CD4-positive, alpha-beta T cell (primary cell): ENCODE measurements at regions of chr3 and their contacts with region 1.

Region 1: DNA sequence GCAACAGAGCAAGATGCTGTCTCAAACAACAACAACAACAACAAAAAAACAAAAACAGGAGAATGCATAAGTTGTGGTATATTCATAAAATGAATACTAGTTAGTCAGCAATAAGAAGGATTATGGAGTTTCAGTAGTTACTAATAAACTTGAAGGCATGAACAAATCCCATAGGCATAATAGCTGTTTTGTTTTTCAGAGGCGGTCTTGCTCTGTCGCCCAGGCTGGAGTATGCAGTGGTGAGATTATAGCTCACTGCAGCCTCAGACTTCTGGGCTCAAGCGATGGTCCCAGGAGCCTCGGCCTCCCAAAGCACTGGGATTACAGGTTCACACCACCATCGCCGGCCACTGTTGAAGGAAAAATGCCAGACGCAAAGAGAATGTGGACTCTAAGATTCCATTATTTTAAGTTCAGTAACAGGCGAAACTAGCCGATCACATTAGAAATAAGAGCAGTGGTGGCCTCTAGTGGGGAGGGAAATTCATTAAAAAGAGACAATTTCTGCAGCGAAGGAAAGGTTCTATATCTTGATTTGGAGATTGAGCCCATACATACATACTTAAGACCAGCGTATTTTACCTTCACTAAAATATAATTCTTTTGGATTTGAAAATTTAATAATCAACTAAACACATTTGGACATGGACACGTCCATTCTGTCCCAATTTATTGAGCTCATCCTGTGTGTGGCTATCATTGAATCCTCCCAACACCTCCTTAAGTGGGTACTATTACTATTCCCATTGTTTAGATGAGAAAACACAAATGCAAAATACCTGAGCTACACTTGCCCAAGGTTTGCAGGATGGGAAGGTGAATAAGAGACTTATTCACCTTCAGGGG is 27.4 kb upstream of the HDAC11 start:
- DNase-seq: peak in 11 of 14 experiments; percentile 14 to 78 (median 32)
- ATAC-seq: peak; percentile 22
- H3K4me3 ChIP-seq: peak overlapping the region; percentile 71
- H3K4me3 Mint-ChIP-seq: peak overlapping the region; percentile 94
- H3K27ac ChIP-seq: peak overlapping the region in 1 of 2 donors; percentile 72
- H3K27ac Mint-ChIP-seq: peak overlapping the region; percentile 79
- H3K4me1 ChIP-seq: peaks cover 21% of the 10 kb centered on the region
- H3K4me1 Mint-ChIP-seq: peaks cover 28% of the 10 kb centered on the region
- H3K27me3 ChIP-seq: no peaks in the 10 kb centered on the region
- H3K27me3 Mint-ChIP-seq: no peaks in the 10 kb centered on the region
- CTCF ChIP-seq: peak; percentile 79

Region 2: GRCh38 chr3:12081826-12082225 is 1370.9 kb before region 1 on chr3:
- CTCF ChIA-PET with region 1: no interaction called
- POLR2A ChIA-PET with region 1: no interaction called
- intact Hi-C with region 1: no loop called
- DNase-seq: no peak
- ATAC-seq: no peak
- H3K4me3 ChIP-seq: no peak overlapping the region
- H3K4me3 Mint-ChIP-seq: no peak overlapping the region
- H3K27ac ChIP-seq: no peak overlapping the region
- H3K27ac Mint-ChIP-seq: no peak overlapping the region
- H3K4me1 ChIP-seq: no peaks in the 10 kb centered on the region
- H3K4me1 Mint-ChIP-seq: no peaks in the 10 kb centered on the region
- H3K27me3 ChIP-seq: peaks cover 0 to 17% of the 10 kb centered on the region in 2 experiments
- H3K27me3 Mint-ChIP-seq: peaks cover 48% of the 10 kb centered on the region
- CTCF ChIP-seq: no peak

Region 3: DNA sequence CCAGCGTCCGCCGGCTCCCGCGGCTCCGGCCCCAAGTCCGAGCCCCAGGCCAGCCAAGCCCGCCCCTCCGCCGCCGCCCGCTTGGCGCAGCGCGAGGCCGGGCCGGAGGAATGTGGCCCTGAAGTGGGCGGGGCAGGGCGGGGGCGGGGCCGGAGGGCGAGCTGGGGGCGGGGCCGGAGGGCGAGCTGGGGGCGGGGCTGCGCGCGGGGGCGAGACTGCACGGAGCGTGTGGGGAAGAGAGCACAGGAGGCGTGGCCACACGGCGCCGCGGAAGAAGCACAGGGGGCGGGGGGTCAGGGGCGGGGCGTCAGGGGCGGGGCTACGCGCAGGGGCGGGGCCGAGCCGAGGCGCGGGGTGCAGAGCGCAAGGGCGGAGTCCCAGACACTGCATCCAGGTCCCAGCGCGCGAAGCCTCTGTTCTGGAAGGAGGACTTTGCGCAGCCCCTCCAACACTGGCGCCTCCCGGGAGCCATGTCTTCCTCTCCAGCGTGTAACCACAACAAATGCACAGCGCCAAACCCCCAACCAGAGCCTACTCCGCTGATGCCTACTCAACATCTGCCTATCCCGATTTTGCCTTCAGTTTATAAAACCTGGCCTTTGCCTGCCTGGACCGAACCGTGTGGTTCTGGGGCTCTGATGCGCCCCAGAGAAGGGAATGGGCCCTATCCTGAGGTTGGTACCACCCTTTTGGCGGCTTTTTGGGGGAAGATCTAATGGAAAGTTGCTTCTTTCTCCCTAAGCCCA is 484.9 kb before region 1 on chr3:
- CTCF ChIA-PET with region 1: no interaction called
- POLR2A ChIA-PET with region 1: no interaction called
- intact Hi-C with region 1: loop called in 1 of 2 experiments (anchors 5 kb)
- DNase-seq: peak; percentile 82 to 97 (median 88)
- ATAC-seq: peak; percentile 95
- H3K4me3 ChIP-seq: peak overlapping the region; percentile 47
- H3K4me3 Mint-ChIP-seq: peak overlapping the region; percentile 80
- H3K27ac ChIP-seq: no peak overlapping the region
- H3K27ac Mint-ChIP-seq: peak overlapping the region; percentile 67
- H3K4me1 ChIP-seq: peaks cover 65% of the 10 kb centered on the region
- H3K4me1 Mint-ChIP-seq: peaks cover 78% of the 10 kb centered on the region
- H3K27me3 ChIP-seq: no peaks in the 10 kb centered on the region
- H3K27me3 Mint-ChIP-seq: no peaks in the 10 kb centered on the region
- CTCF ChIP-seq: no peak

Region 4: GRCh38 chr3:13091898-13092611 is 360.7 kb before region 1 on chr3:
- CTCF ChIA-PET with region 1: interaction called, 6 read pairs
- POLR2A ChIA-PET with region 1: interaction called, 4 read pairs
- intact Hi-C with region 1: loop called (anchors 1 to 2 kb)
- DNase-seq: peak; percentile 63 to 88 (median 78)
- ATAC-seq: peak; percentile 93
- H3K4me3 ChIP-seq: no peak overlapping the region
- H3K4me3 Mint-ChIP-seq: no peak overlapping the region
- H3K27ac ChIP-seq: no peak overlapping the region
- H3K27ac Mint-ChIP-seq: no peak overlapping the region
- H3K4me1 ChIP-seq: peaks cover 8% of the 10 kb centered on the region
- H3K4me1 Mint-ChIP-seq: peaks cover 6% of the 10 kb centered on the region
- H3K27me3 ChIP-seq: peaks cover 0 to 3% of the 10 kb centered on the region in 2 experiments
- H3K27me3 Mint-ChIP-seq: peaks cover 18% of the 10 kb centered on the region
- CTCF ChIP-seq: peak; percentile 94

Region 5: DNA sequence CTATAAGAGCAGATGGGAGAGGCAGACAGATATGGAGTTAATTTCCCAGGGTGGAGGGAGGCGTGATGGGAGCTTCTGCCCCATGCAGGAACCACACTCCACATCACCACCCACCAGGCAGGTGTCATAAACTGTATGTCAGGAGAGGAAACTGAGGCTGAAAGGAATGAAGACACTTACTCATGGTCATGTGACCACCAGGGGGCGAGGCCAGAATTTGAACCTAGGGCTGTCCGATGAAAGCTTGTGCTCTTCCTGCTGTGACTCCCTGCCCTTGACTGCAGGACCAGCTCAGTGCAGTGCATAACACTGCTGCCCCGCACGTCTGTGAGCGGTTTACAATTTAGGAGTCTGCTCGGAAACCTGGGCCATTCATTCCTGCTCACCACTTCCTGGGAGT is 61.4 kb before region 1 on chr3:
- CTCF ChIA-PET with region 1: interaction called, 56 read pairs
- POLR2A ChIA-PET with region 1: interaction called, 17 read pairs
- intact Hi-C with region 1: loop called (anchors 1 kb)
- DNase-seq: peak in 11 of 14 experiments; percentile 18 to 69 (median 26)
- ATAC-seq: peak; percentile 34
- H3K4me3 ChIP-seq: no peak overlapping the region
- H3K4me3 Mint-ChIP-seq: no peak overlapping the region
- H3K27ac ChIP-seq: no peak overlapping the region
- H3K27ac Mint-ChIP-seq: peak overlapping the region; percentile 20
- H3K4me1 ChIP-seq: peaks cover 25% of the 10 kb centered on the region
- H3K4me1 Mint-ChIP-seq: peaks cover 26% of the 10 kb centered on the region
- H3K27me3 ChIP-seq: no peaks in the 10 kb centered on the region
- H3K27me3 Mint-ChIP-seq: no peaks in the 10 kb centered on the region
- CTCF ChIP-seq: peak; percentile 51

Region 6: DNA sequence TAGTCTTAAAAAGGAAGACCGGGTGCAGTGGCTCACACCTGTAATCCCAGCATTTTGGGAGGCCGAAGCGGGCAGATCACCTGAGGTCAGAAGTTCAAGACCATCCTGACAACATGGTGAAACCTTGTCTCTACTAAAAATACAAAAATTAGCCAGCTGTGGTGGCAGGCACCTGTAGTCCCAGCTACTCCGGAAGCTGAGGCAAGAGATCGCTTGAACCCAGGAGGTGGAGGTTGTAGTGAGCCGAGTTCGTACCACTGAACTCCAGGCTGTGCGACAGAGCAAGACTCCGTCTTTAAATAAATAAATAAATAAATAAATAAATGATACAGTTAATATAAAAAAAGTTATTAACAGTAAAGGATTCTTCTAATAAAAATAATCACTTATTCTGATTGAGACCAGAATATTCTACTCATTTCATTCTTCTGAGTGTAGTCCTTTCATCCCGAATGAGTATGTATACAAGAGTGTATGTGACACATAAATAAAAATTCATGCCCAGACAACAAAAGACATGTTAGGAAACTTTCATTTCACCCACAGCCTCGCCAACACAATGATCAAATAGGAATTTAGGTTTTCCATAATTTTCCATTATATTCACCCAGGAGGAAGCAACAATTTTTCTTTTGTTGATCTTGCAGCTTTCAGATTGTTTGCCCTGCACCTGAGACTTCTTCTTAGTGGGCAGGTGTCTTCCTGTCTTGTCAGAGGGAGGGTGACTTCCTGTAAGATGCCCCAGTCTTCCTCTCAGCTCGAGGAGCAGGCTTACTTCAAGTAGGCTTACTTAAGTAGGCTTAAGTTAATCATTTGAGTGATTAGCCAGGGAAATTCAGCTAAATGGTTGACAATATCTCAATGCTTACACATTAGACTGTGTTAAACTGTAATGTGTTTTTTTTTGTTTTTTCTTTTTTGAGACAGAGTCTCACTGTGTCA is 24.8 kb before region 1 on chr3:
- CTCF ChIA-PET with region 1: interaction called, 11 read pairs
- POLR2A ChIA-PET with region 1: interaction called, 16 read pairs
- intact Hi-C with region 1: no loop called
- DNase-seq: peak in 10 of 14 experiments; percentile 20 to 82 (median 48)
- ATAC-seq: peak; percentile 99
- H3K4me3 ChIP-seq: no peak overlapping the region
- H3K4me3 Mint-ChIP-seq: peak overlapping the region; percentile 59
- H3K27ac ChIP-seq: peak overlapping the region; percentile 64 to 69
- H3K27ac Mint-ChIP-seq: peak overlapping the region; percentile 86
- H3K4me1 ChIP-seq: peaks cover 50% of the 10 kb centered on the region
- H3K4me1 Mint-ChIP-seq: peaks cover 39% of the 10 kb centered on the region
- H3K27me3 ChIP-seq: no peaks in the 10 kb centered on the region
- H3K27me3 Mint-ChIP-seq: no peaks in the 10 kb centered on the region
- CTCF ChIP-seq: no peak

Region 7: DNA sequence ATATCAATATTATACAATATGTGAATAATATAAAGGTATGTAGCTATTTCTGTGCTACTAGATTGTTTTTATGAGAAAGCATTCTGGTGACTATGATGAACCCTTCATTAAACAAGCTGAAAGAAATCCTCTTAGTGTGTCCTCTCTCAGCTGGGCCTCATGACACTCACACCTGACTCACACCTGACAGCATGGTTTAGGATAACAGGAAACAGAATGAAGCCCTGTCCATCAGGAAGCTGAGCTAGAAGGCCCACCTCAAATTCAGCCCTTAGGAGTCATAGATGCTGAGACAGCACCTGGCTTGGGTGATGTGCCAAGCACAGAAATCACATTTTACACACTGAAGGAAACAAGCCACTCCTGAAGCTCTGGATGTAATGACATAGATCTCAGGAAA is 641.1 kb after region 1 on chr3:
- CTCF ChIA-PET with region 1: no interaction called
- POLR2A ChIA-PET with region 1: no interaction called
- intact Hi-C with region 1: no loop called
- DNase-seq: no peak
- ATAC-seq: no peak
- H3K4me3 ChIP-seq: no peak overlapping the region
- H3K4me3 Mint-ChIP-seq: no peak overlapping the region
- H3K27ac ChIP-seq: no peak overlapping the region
- H3K27ac Mint-ChIP-seq: no peak overlapping the region
- H3K4me1 ChIP-seq: no peaks in the 10 kb centered on the region
- H3K4me1 Mint-ChIP-seq: no peaks in the 10 kb centered on the region
- H3K27me3 ChIP-seq: peaks cover 0 to 4% of the 10 kb centered on the region in 2 experiments
- H3K27me3 Mint-ChIP-seq: peaks cover 51% of the 10 kb centered on the region
- CTCF ChIP-seq: no peak

Region 8: DNA sequence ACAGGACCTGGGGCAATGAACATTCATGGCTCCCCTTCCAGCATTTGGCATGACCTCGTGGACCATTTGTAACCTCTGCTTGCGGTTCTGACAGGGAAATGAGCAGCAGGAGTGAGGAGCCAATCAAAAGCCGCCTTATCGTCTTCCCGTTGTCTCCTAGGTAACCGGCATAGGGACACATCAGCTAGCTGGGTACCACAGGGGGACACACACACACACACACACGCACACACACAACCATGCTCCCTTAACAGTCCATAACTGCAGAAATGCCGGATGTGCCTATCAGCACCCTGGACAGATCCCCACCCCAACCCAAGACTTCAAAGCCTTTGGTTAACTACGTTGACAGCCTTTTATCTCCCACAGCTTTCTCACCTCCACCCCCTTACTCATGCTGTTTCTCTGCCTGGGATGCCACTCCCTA is 1145.4 kb after region 1 on chr3:
- CTCF ChIA-PET with region 1: no interaction called
- POLR2A ChIA-PET with region 1: no interaction called
- intact Hi-C with region 1: no loop called
- DNase-seq: peak; percentile 9 to 64 (median 36)
- ATAC-seq: peak; percentile 61
- H3K4me3 ChIP-seq: no peak overlapping the region
- H3K4me3 Mint-ChIP-seq: no peak overlapping the region
- H3K27ac ChIP-seq: no peak overlapping the region
- H3K27ac Mint-ChIP-seq: no peak overlapping the region
- H3K4me1 ChIP-seq: peaks cover 3% of the 10 kb centered on the region
- H3K4me1 Mint-ChIP-seq: no peaks in the 10 kb centered on the region
- H3K27me3 ChIP-seq: peaks cover 43 to 44% of the 10 kb centered on the region in 2 experiments
- H3K27me3 Mint-ChIP-seq: peaks cover 64% of the 10 kb centered on the region
- CTCF ChIP-seq: no peak